H1 (cell line): ENCODE measurements at regions of chr14 and their contacts with region 1.

Region 1: GRCh38 chr14:69553221-69553620 is 21.4 kb downstream of the CCDC177 start:
- DNase-seq: no peak
- H3K4me3 ChIP-seq: no peak overlapping the region
- H3K27ac ChIP-seq: no peak overlapping the region
- H3K4me1 ChIP-seq: peaks cover 0 to 9% (median 3%) of the 10 kb centered on the region in 4 experiments; a peak in 4 of 7 replicates
- H3K27me3 ChIP-seq: no peaks in the 10 kb centered on the region
- CTCF ChIP-seq: no peak
- EP300 ChIP-seq: no peak
- POLR2A ChIP-seq: no peak
- RAD21 ChIP-seq: no peak

Region 2: GRCh38 chr14:69535230-69535848 is 17.9 kb before region 1 on chr14:
- CTCF ChIA-PET with region 1: interaction called, 30 read pairs
- POLR2A ChIA-PET with region 1: interaction called, 4 read pairs
- DNase-seq: peak in 1 of 2 experiments; percentile 71
- H3K4me3 ChIP-seq: no peak overlapping the region
- H3K27ac ChIP-seq: no peak overlapping the region
- H3K4me1 ChIP-seq: no peaks in the 10 kb centered on the region
- H3K27me3 ChIP-seq: no peaks in the 10 kb centered on the region
- CTCF ChIP-seq: peak; percentile 73 to 91 (median 83)
- EP300 ChIP-seq: no peak
- POLR2A ChIP-seq: no peak
- RAD21 ChIP-seq: peak; percentile 83 to 85